ENCODE measurements at regions of chr19 and their contacts with region 1.

Region 1: DNA sequence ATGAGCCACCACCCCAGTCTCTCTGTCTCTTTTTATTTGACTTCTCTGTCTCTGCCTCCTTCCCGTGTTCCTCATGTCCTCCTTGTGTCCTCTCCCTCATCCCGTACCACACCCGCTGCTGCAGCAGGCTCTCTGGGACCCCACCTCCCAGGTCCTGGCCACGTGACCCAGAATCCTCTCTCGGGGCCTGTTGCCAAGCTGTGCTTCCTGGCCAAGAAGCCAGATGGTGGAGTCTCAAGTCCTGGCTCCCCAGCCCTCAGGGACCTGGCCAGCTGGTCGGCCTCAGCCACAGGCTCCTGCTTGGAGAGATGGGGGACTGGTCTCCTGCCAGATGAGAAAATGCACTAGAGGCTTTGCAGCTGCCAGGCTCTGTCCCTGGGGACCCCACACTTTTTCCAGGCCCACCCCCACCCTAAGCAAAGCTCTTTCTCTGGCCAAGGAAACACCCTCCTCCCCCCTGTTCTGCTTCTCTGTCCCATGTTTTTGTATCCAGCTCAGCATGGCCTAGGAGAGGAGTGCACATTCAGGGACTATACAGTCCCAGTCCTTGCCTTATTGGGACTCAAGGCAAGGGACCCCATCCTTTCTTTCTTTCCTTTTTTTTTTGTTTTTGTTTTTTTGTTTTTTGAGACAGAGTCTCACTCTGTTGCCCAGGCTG is 34.3 kb upstream of the SHKBP1 start:
- DNase-seq: peak; percentile 61
- H3K4me3 ChIP-seq: no peak overlapping the region
- H3K27ac ChIP-seq: no peak overlapping the region
- H3K27me3 ChIP-seq: peaks cover 6% of the 10 kb centered on the region
- CTCF ChIP-seq: no peak

Region 2: DNA sequence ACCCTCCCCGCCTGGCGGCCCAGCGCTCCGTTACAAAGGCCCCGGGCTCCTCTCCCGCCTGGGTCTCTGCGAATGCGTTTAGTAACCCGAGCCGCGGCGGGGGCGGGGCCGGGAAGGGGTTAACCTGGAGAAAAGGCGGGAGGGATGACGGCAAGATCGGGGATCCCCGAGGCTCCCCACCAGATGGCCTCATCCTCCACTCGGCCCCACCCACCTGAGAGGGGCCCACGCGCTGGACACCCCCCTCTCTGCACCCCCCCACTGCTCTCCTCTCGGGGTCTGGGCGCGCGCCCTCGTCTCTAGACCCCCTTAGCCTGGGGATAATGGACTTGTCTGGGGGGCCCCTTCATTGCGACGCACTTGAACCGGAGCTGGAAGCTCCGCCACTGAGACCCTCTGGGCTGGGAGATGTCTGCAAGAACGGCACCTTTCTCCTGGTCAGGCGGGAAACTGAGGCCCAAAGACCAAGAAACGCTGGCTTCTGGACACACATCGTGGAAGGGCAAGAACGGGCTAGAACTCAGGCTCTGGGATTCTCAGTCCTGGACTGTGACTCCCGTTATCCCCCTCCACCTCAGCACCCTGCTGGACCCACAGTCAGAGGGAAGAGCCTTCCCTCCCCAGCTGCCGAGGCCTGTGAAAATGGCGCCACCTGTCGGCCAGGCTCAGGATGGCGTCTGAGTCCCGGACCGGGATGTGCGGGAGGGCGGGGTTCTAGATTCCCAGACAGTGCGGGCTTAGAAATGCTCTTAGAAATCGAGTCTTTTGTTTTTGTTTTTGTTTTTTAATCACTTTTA is 56.0 kb after region 1 on chr19:
- CTCF ChIA-PET with region 1: interaction called, 19 read pairs
- POLR2A ChIA-PET with region 1: interaction called, 13 read pairs
- DNase-seq: peak; percentile 81
- H3K4me3 ChIP-seq: peak overlapping the region; percentile 69
- H3K27ac ChIP-seq: peak overlapping the region; percentile 87
- H3K27me3 ChIP-seq: no peaks in the 10 kb centered on the region
- CTCF ChIP-seq: peak; percentile 99

Measured in AG04450 (cell line).